Ascending aorta (tissue), 2 donors: ENCODE measurements at regions of chr2 and their contacts with region 1.

Region 1: GRCh38 chr2:216651351-216651881 is 18.2 kb downstream of the IGFBP2 start:
- DNase-seq: no peak
- H3K4me3 ChIP-seq: no peak overlapping the region
- H3K27ac ChIP-seq: peak overlapping the region; percentile 72 to 91
- H3K4me1 ChIP-seq: peaks cover 19 to 65% of the 10 kb centered on the region in 2 donors
- H3K27me3 ChIP-seq: no peaks in the 10 kb centered on the region
- CTCF ChIP-seq: no peak

Region 2: GRCh38 chr2:216519154-216519762 is 132.2 kb before region 1 on chr2:
- intact Hi-C with region 1: loop called (anchors 5 kb)
- DNase-seq: peak in 1 of 2 donors; percentile 90
- H3K4me3 ChIP-seq: no peak overlapping the region
- H3K27ac ChIP-seq: peak overlapping the region; percentile 40 to 52
- H3K4me1 ChIP-seq: peaks cover 0 to 10% of the 10 kb centered on the region in 2 donors
- H3K27me3 ChIP-seq: no peaks in the 10 kb centered on the region
- CTCF ChIP-seq: peak; percentile 71 to 83 (median 79)

Region 3: DNA sequence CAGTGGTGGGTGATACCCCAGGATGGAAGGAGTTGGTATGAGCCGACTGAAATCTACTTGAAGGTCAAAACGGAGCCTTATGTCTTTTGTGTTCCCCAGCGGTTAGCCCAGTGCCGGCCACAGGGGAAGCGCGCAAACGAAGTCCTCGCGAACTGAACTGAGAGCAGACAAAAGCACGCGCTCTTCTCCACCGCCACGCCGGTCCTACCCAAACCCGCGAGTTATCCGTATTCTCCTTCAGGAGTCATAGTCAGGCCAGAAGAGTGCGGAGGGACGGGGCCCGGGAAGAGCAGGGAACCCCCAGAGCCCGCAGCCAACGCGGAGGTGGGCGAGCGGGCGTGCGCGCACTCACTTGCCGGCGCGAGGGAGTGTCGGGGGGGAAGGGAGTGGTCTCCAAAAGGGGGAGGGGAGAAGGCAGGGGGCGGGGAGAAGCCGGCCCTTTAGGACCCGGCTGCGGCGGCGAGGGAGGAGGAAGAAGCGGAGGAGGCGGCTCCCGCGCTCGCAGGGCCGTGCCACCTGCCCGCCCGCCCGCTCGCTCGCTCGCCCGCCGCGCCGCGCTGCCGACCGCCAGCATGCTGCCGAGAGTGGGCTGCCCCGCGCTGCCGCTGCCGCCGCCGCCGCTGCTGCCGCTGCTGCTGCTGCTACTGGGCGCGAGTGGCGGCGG is 18.3 kb before region 1 on chr2 and contains the start of gene IGFBP2:
- intact Hi-C with region 1: loop called (anchors 2 kb)
- DNase-seq: peak in 1 of 2 donors; percentile 77
- H3K4me3 ChIP-seq: peak within 1 kb of the TSS; percentile 81 to 96
- H3K27ac ChIP-seq: peak within 1 kb of the TSS; percentile 80 to 88
- H3K4me1 ChIP-seq: peaks cover 0 to 13% of the 10 kb centered on the region in 2 donors
- H3K27me3 ChIP-seq: no peaks in the 10 kb centered on the region
- CTCF ChIP-seq: no peak
- total RNA-seq, gene IGFBP2: 1,691 TPM